GM10248 (cell line): ENCODE measurements at regions of chr2 and their contacts with region 1.

Region 1: DNA sequence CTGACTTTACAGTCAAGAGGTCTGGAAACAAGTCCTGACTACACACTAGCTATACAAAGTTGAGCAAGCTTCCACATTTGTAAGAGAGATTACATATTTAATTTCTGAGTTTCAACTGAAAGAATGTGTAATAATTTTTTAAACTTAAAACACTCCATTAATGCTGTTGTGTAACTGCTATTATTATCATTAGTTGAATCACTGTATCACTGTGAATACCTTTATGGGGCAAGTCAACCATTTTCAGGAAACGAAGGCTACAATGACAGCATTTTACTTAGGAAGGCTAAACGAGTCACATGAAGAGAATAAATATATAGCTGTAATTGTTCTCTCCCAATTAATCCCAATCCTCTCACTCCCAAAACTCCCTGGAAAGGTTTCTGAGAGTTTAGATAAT is 46.3 kb downstream of the TRIP12 start:
- DNase-seq: no peak
- CTCF ChIP-seq: no peak

Region 2: DNA sequence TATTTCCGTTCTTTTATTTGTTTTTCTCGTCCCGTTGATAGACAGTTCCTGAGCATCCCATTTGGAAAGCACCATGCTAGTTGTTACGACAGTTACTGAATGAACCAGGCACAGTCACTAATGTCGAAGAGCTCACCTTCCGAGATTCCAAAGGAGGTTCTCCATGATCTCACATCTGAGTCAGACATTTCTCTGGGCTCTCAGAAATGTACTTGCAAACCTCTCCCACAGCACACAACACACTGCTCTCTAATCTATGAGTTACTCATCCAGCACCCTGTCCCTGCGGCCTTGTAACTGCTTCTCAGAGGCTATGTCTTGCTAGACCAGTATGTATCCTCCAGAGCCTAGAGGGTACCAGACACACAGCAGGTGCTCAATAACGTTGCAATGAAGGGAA is 335.9 kb before region 1 on chr2:
- CTCF ChIA-PET with region 1: no interaction called
- POLR2A ChIA-PET with region 1: no interaction called
- DNase-seq: no peak
- CTCF ChIP-seq: no peak

Region 3: GRCh38 chr2:230000118-230000841 is 124.7 kb after region 1 on chr2:
- CTCF ChIA-PET with region 1: no interaction called
- POLR2A ChIA-PET with region 1: interaction called, 10 read pairs
- DNase-seq: peak; percentile 80
- CTCF ChIP-seq: no peak